Activated CD8-positive, alpha-beta T cell treated with anti-CD3 and anti-CD28 coated beads, Interleukin-2, amount 10 ng/mL, durations not matched to agents 7 days and 5 days (primary cell): ENCODE measurements at regions of chr2 and their contacts with region 1.

Region 1: GRCh38 chr2:160109936-160110673 is 47.7 kb upstream of the PLA2R1 start:
- DNase-seq: peak; percentile 66
- ATAC-seq: peak; percentile 68
- H3K4me3 Mint-ChIP-seq: no peak overlapping the region
- H3K27ac Mint-ChIP-seq: no peak overlapping the region
- H3K4me1 Mint-ChIP-seq: no peaks in the 10 kb centered on the region
- H3K27me3 Mint-ChIP-seq: peaks cover 3% of the 10 kb centered on the region

Region 2: GRCh38 chr2:160075171-160075570 is 34.9 kb before region 1 on chr2:
- CTCF ChIA-PET with region 1: no interaction called
- POLR2A ChIA-PET with region 1: no interaction called
- DNase-seq: no peak
- ATAC-seq: no peak
- H3K4me3 Mint-ChIP-seq: no peak overlapping the region
- H3K27ac Mint-ChIP-seq: no peak overlapping the region
- H3K4me1 Mint-ChIP-seq: no peaks in the 10 kb centered on the region
- H3K27me3 Mint-ChIP-seq: peaks cover 7% of the 10 kb centered on the region

Region 3: DNA sequence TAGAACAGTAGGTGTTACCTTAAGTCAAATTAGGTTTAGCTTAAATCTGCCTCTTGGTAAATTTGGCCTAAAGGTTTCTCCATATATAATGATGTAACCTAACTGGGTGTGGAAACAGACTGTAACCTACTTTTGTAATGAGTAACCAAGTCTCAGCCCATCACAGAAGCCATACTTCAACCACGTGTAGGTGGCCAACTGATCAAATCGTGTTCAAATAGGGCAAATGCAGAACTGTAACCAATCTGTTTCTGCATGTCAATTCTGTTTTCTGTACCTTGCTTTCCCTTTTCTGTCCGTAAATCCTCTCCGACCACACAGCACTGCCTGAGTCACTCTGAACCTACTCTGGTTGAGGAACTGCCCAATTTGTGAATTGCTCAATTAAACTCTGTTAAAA is 13.7 kb before region 1 on chr2:
- CTCF ChIA-PET with region 1: interaction called, 12 read pairs
- POLR2A ChIA-PET with region 1: no interaction called
- DNase-seq: no peak
- ATAC-seq: no peak
- H3K4me3 Mint-ChIP-seq: no peak overlapping the region
- H3K27ac Mint-ChIP-seq: no peak overlapping the region
- H3K4me1 Mint-ChIP-seq: no peaks in the 10 kb centered on the region
- H3K27me3 Mint-ChIP-seq: peaks cover 2% of the 10 kb centered on the region

Region 4: DNA sequence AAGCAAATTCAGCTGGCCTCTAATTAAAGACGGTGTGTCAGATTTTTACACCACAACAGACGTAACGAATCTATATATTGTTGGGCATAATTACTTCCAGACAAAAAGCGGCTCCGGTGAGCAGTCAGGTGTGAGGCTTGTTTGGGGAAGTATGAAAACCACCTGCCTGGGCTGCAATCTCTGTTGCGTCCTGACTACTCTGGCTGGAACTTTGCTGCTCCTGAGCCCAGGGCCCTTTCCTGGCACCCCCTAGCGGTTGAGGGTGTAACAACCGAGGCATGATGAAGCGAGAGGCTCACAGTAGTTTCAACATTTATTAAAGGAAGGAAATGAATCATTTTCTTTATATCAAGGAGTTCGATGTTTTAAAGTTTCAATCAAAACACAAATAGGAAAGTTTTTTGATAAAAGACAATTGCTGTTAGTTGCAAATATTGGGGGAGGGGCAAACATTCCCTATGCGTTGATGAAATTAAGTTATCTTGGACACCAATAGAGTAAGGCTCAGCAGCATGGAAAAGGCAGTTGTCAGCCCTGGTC is 100.6 kb after region 1 on chr2:
- CTCF ChIA-PET with region 1: interaction called, 24 read pairs
- POLR2A ChIA-PET with region 1: no interaction called
- DNase-seq: peak; percentile 76
- ATAC-seq: peak; percentile 88
- H3K4me3 Mint-ChIP-seq: no peak overlapping the region
- H3K27ac Mint-ChIP-seq: no peak overlapping the region
- H3K4me1 Mint-ChIP-seq: peaks cover 18% of the 10 kb centered on the region
- H3K27me3 Mint-ChIP-seq: peaks cover 14% of the 10 kb centered on the region